ENCODE measurements at regions of chr17 and their contacts with region 1.

Region 1: DNA sequence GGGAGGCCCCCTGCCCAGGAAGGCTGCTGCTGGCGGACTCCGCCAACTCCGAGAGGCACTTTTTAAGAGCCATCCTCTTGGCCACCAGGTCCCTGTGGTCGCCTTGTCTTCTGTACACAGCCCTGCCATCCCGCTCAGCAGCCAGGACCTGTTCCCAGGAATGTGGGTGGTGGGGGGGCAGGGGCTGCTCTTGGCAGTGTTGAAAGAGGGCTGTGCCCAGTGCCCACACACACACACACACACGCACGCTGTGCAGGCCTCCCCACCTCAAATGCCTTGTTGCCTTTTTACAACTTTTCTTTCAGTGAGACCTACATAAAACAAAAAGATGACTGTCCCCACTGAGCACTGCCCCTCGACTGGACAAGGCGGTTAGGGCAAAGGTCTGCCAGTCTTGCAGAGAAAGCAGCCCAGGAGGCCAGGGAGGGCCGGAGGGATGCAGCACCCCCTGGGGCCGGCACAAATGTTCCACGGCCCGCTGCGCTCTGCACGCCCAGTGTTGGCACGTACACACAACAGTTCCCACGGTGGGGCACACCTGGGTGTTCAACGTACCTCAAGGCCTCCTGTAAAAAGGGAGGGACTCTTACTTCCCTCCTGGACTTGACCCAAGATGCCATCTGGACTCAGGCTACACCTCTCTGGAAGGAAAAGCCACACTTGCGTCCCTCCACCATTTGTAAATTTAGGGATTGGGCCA is 18.5 kb upstream of the PITPNA start:
- DNase-seq: no peak
- H3K4me3 ChIP-seq: no peak overlapping the region
- H3K27ac ChIP-seq: no peak overlapping the region
- H3K4me1 ChIP-seq: peaks cover 0 to 13% of the 10 kb centered on the region in 2 donors
- H3K27me3 ChIP-seq: no peaks in the 10 kb centered on the region
- CTCF ChIP-seq: no peak
- POLR2A ChIP-seq: no peak

Region 2: DNA sequence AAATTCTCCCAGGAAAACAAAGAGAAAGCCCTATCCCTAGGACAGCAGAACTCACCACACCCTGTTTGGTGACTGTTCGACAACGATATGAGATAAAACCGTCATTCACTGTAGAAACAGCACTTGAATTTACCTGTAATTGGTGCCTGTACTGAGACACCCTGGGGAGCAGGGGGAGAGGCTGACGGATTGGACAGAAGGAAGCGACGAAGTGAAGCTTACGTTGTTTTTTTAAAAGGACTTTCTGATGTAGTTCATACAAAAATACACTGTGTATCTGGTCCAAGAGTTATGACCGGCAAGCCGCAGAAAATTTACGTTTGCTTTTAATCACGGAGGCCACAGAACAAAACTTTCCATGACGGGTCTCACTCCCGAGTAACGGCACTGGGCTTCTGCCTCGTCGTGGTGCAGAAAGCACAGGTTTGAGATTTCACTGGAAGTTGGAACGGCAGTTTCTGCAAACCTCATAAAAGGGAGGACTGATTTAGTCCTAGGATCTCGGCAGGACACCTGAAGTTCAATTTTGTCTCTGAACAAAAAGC is 611.2 kb before region 1 on chr17:
- intact Hi-C with region 1: no loop called
- DNase-seq: peak; percentile 43 to 59
- H3K4me3 ChIP-seq: peak overlapping the region; percentile 12 to 13
- H3K27ac ChIP-seq: peak overlapping the region; percentile 82 to 89
- H3K4me1 ChIP-seq: peaks cover 0 to under 1% of the 10 kb centered on the region in 2 donors
- H3K27me3 ChIP-seq: no peaks in the 10 kb centered on the region
- CTCF ChIP-seq: no peak
- POLR2A ChIP-seq: peak in 1 of 2 donors; percentile 15

Region 3: DNA sequence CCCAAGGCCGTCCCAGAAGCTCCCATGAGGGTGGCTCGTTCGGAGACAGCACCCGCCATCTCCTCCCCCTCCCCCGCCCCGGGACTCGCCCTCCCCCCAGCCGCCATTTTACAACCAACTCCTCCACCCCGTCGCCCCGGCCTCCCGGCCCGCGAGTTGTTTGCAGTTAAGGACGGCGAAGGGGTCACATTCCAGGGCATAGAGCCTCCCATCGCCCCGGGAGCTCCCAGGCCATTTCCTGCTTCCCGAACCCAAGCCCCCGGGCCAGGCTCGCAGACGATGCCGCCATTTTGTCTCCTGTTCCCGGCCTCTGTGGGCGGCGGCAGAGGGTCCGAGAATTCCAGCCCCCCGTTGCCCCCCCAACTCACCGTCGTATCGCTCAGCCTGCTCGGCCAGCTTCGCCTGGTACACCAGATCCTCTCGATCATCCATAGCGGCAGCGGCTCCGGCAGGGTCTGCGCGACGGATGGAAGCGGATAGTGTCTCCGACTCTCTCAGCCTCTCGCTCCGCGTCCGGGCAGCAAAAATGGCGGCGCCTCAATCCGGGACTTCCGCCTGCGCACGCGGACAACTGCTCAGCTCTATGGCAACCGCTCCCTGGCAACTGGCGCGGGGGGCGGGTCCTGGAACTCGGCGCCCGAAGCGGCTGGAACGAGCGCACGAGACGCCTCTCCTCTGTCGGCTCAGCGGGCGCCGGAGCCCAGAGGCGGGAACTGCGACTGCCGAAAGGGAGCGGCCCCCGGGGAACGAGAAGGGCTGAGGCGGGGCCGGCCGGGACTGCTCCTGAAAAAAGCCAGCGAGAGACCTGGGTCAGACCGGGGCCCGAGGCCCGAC is 181.2 kb before region 1 on chr17 and contains the start of gene YWHAE:
- intact Hi-C with region 1: no loop called
- DNase-seq: peak; percentile 97 to 99
- H3K4me3 ChIP-seq: peak within 1 kb of the TSS; percentile 78 to 85
- H3K27ac ChIP-seq: peak within 1 kb of the TSS; percentile 97 to 99
- H3K4me1 ChIP-seq: no peaks in the 10 kb centered on the region
- H3K27me3 ChIP-seq: no peaks in the 10 kb centered on the region
- CTCF ChIP-seq: peak in 1 of 4 experiments; percentile 10
- POLR2A ChIP-seq: peak; percentile 86 to 97
- total RNA-seq, gene YWHAE: 390 to 894 (median 580) TPM

Region 4: DNA sequence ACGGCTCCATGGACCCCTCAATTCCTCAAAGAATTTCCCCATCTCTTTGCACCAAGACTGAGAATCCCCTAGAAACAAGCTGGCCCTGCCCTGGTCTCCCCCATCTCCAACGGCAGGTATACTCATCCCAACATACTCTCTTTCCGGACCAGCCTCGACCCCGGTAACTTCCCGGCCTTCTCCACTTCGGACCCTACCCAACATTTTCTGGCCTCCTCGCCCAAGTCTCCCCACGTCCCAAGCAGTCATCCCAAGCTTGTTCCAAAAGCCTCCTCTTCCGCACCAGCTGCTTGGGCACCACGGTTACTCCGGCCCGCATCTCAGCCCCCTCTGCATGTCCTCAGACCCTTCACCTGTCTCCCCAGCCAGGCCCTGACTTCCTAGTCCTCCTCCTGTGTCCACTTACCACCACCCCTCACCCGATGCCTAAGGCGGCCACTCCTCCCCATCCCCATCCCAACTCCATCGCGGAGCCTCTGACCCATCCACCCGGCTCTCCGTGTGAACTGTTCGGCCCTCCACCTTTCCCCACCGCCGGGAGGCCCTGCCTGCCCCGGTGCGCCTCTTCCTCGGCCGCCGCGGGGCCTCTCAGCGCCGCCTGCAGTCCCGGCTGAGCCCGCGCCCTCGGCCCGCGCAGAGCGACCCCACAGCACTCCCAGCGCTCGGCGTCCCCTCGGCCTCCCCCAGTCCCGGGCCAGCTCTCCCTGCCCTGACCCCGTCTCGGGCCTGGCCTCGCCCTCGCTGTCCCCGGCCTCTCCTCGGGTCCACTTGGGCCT is 19.5 kb before region 1 on chr17:
- intact Hi-C with region 1: no loop called
- DNase-seq: no peak
- H3K4me3 ChIP-seq: peak overlapping the region; percentile 52 to 94
- H3K27ac ChIP-seq: peak overlapping the region; percentile 78 to 90
- H3K4me1 ChIP-seq: peaks cover 0 to 24% of the 10 kb centered on the region in 2 donors
- H3K27me3 ChIP-seq: no peaks in the 10 kb centered on the region
- CTCF ChIP-seq: peak in 2 of 4 experiments; percentile 26 to 39
- POLR2A ChIP-seq: no peak

Region 5: DNA sequence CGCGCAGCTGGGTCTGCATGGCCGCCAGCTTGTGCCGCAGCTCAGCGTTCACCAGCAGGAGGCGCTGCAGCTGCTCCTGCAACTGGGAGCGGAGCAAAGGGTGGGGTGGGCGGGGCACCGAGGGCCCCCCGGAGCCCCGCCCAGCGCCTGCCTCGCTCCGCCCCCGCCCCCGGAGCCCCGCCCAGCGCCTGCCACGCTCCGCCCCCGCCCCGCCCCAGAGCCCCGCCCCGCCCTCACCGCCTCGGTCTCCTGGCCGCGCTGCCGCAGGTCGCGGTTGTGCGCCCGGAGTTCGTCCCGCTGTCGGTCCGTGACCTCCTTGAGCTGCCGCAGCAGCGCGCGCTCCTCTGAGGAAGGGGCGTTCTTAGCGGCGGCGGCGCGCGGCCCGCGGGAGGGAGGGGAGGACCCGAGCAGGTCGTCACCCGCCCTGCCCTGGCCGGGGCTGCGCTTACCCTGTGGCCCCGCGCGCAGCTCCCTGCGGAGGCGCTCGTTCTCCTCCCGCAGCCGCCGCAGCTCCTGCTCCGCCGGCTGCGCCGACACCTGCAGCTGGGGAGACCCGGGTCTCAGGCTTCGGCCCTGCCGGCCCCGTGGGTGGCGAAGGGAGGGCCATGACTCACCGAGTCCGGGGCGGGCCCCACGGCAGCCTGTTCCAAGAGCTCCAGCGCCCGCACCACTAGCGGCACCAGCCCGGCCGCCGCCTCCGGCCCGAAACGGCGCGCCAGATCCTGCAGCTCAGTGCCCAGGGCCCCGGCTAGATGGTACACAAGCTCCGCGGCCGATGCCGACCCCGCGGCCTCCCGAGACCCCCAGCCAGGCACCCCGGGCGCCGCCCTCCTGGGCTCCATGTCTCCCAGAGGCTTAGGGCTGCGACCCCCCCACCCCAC is 68.1 kb after region 1 on chr17:
- intact Hi-C with region 1: loop called (anchors 5 kb)
- DNase-seq: peak; percentile 93 to 97
- H3K4me3 ChIP-seq: peak overlapping the region; percentile 58 to 73
- H3K27ac ChIP-seq: peak overlapping the region; percentile 97 to 100
- H3K4me1 ChIP-seq: peaks cover 0 to 13% of the 10 kb centered on the region in 2 donors
- H3K27me3 ChIP-seq: no peaks in the 10 kb centered on the region
- CTCF ChIP-seq: peak; percentile 31 to 99 (median 95)
- POLR2A ChIP-seq: peak; percentile 48 to 68

Region 6: DNA sequence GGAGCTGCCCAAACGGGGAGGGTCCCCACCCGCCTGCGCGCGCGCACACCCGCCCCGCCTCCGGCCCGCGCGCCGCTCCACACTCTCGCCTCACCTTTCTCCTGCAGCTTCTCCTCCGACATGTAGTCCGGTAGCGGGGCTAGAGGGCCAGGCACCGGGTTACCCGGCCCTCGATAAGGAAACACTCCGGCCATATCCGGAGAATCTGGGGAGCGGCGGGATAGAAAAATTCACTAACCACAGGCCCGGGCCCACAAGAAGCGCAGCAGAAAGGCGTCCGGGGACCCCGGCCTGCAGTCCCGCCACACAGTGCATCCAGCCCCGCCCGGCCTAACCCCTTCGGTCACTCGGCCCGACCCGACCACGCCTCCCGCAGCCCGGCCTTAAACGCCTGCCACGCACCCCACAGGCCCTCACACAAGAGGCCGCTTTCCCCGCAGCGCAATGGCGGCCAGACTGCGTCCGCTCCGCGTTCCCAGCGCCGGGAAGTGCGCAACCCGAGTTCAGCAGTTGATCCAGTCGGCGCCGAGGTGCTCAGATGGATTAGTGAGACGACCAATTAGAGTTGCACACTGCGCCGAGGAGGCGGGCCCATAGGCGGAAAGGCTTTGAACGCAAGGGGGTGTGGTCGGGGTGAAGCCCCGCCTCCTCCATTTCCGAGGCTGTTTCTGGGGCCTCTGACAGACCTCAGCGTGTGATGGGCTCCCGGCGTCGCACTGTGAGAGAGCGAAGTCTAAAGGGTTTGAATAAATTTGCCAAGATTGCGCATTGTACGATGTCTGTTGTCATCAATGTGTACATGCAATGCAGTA is 103.5 kb after region 1 on chr17 and contains the start of gene PRPF8:
- intact Hi-C with region 1: no loop called
- DNase-seq: peak; percentile 98 to 99
- H3K4me3 ChIP-seq: peak within 1 kb of the TSS; percentile 83 to 92
- H3K27ac ChIP-seq: peak within 1 kb of the TSS; percentile 90 to 91
- H3K4me1 ChIP-seq: peaks cover 0 to 7% of the 10 kb centered on the region in 2 donors
- H3K27me3 ChIP-seq: no peaks in the 10 kb centered on the region
- CTCF ChIP-seq: peak in 2 of 4 experiments; percentile 7 to 9
- POLR2A ChIP-seq: peak; percentile 92 to 97
- total RNA-seq, gene PRPF8: 123 to 413 (median 243) TPM

Measured in uterus (tissue), 4 donors.